ENCODE measurements at regions of chr4 and their contacts with region 1.

Region 1: GRCh38 chr4:7518871-7519637 is 84.3 kb upstream of the PSAPL1 start:
- DNase-seq: peak in 1 of 2 donors; percentile 41
- H3K4me3 ChIP-seq: no peak overlapping the region
- H3K27ac ChIP-seq: no peak overlapping the region
- H3K4me1 ChIP-seq: no peaks in the 10 kb centered on the region
- H3K27me3 ChIP-seq: peaks cover 0 to 53% of the 10 kb centered on the region in 2 donors
- CTCF ChIP-seq: no peak
- POLR2A ChIP-seq: no peak

Region 2: DNA sequence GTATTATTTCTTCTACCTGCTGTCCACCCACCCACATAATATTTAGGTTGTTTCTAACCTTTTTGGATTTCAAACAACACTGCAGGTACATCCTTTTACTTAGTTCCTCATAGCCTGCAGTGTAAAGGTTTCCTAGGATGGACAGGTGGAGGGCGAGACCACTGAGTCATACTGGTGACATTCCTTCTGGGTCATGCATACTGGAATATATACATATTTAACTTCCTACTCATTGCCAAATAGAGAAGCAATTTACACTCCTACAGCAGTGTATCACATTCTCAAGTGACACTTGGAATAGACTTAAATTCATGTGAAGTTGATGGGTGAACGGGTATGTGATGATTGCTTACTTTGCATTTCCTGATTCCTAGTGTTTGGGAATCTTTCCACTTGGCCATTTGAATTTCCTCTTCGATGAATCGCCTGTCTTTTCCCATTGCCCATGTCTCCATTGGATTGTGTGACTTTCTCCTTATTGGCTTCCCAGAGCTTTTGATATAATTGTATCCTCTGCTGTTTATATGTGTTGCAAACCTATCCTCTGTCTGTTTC is 1038.4 kb before region 1 on chr4:
- intact Hi-C with region 1: loop called (anchors 5 kb)
- DNase-seq: no peak
- H3K4me3 ChIP-seq: no peak overlapping the region
- H3K27ac ChIP-seq: no peak overlapping the region
- H3K4me1 ChIP-seq: no peaks in the 10 kb centered on the region
- H3K27me3 ChIP-seq: peaks cover 0 to 18% of the 10 kb centered on the region in 2 donors
- CTCF ChIP-seq: no peak
- POLR2A ChIP-seq: no peak